Left ventricle myocardium superior (tissue), 1 donor: ENCODE measurements at regions of chr16 and their contacts with region 1.

Region 1: DNA sequence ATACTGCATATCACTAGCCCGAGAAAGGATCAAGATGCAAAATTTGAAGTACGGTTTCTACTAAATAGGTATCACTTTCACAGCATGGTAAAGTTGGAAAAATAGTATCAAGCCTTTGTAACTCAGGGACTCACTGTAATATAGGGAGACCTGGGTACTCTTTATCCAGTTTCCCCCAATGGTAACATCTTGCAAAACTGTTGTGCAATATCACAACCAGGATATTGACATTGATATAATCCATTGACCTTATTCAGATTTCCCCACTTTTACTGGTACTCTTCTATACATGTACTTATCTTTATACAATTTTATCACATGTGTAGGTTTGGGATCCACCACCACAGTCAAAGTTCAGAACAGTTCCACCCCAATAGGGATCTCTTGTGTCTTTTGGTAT is 20.4 kb upstream of the GINS3 start:
- DNase-seq: no peak
- ATAC-seq: no peak

Region 2: GRCh38 chr16:58306327-58306726 is 65.5 kb before region 1 on chr16:
- intact Hi-C with region 1: loop called (anchors 2 kb)
- DNase-seq: no peak
- ATAC-seq: no peak